Ovary (tissue), 10 donors: ENCODE measurements at regions of chr11 and their contacts with region 1.

Region 1: DNA sequence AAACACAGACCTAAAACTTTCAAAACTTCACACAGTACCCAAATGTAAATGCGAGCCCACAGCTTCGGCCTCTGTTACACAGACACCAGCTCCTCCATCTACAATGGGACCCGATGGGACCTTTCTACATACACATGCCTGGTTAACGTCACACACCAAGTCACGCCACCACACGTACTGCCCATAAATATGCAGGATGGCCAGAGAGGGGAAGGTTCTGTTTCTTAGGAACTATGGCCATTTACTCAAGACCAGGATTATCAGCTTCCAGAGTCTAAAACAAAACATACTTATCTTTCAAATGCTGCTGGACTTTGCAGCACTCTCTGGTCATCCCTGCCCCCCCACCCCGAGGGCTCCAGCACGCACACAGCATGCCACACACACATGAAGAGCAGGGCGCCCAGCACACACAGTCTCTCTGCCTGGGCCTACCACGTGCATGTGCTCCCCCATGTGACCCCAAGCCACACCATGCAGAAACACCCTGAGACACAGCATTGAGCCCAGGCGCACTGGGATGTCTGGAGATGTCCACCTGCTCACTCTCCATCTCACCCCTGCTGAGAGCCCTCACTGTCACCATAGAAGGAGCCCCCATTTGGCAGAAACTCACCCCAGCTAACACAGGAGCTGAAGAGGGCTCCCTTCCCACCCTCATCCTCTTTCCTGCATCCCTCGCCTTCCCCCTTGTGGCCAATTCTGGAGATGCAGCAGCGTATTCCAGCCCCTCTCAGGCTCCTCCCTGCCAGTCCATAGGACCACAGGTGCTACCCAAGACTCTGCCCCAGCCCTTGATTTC is 61.8 kb downstream of the SLC22A12 start:
- DNase-seq: peak; percentile 77 to 89 (median 88)
- H3K4me3 ChIP-seq: no peak overlapping the region
- H3K27ac ChIP-seq: no peak overlapping the region
- H3K4me1 ChIP-seq: no peaks in the 10 kb centered on the region
- H3K27me3 ChIP-seq: no peaks in the 10 kb centered on the region
- CTCF ChIP-seq: peak; percentile 81 to 93 (median 91)
- EP300 ChIP-seq: no peak
- POLR2A ChIP-seq: no peak

Region 2: DNA sequence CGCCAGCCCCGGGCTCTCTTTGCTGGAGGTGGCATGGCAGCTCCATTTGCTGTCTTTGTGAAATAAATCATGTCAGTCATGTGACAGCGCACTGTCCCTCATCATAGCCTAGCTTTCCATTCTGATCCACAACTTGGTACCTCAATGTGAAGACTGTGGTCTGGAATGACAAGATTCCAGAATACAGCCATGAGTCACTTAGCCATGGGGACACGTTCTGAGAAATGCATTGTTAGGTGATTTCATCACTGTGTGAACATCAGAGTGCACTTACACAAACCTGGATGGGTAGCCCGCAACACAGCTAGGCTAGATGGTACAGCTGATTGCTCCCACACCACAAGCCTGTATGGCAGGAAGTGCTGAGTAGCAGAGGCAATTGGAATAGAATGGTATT is 266.5 kb before region 1 on chr11:
- intact Hi-C with region 1: loop called in 1 of 4 experiments (anchors 10 kb)
- DNase-seq: no peak
- H3K4me3 ChIP-seq: no peak overlapping the region
- H3K27ac ChIP-seq: no peak overlapping the region
- H3K4me1 ChIP-seq: no peaks in the 10 kb centered on the region
- H3K27me3 ChIP-seq: no peaks in the 10 kb centered on the region
- CTCF ChIP-seq: no peak
- EP300 ChIP-seq: no peak
- POLR2A ChIP-seq: no peak

Region 3: GRCh38 chr11:64448599-64449556 is 203.9 kb before region 1 on chr11:
- intact Hi-C with region 1: loop called in 3 of 4 experiments (anchors 2 to 10 kb)
- DNase-seq: peak; percentile 58 to 85 (median 78)
- H3K4me3 ChIP-seq: peak overlapping the region; percentile 12
- H3K27ac ChIP-seq: no peak overlapping the region
- H3K4me1 ChIP-seq: peaks cover 8% of the 10 kb centered on the region
- H3K27me3 ChIP-seq: no peaks in the 10 kb centered on the region
- CTCF ChIP-seq: peak; percentile 59 to 73 (median 65)
- EP300 ChIP-seq: no peak
- POLR2A ChIP-seq: no peak

Region 4: DNA sequence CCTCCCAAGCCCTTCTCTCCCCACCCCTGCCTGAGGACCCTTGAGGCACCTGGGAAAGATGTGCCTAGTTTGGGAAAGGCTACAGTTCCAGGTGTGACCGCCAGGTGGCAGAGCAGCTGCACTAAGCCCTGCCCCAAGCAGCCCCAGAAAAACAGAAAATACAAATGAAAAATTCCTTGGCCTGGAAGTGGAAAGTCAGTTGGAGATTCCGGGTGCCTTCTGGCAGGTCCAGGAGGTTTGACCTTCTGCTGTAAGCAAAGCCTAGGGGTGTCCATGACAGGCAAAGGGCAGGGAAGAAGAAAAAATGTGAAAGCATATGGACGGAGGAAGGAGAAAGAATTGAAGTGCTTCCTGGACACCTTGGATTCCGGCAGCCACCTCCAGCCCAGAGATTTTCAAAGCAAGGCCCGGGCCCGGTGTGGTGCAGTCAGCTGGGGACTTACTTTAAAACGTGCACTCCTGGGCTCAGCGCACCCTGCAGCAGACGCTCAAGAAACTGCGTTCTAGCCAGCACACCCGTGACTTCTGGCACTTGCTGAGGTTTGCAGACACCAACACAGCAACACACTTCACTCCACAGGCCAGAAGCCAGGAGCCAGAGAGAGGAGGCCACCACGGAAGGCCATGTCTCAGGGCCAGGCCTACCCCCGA is 99.1 kb before region 1 on chr11:
- intact Hi-C with region 1: loop called in 3 of 4 experiments (anchors 1 to 2 kb)
- DNase-seq: peak; percentile 67 to 85 (median 80)
- H3K4me3 ChIP-seq: no peak overlapping the region
- H3K27ac ChIP-seq: peak overlapping the region; percentile 42 to 75
- H3K4me1 ChIP-seq: peaks cover 20% of the 10 kb centered on the region
- H3K27me3 ChIP-seq: no peaks in the 10 kb centered on the region
- CTCF ChIP-seq: peak; percentile 95 to 98 (median 97)
- EP300 ChIP-seq: no peak
- POLR2A ChIP-seq: no peak

Region 5: GRCh38 chr11:64713031-64713780 is 60.4 kb after region 1 on chr11:
- intact Hi-C with region 1: no loop called
- DNase-seq: peak in 2 of 5 donors; percentile 48 to 60
- H3K4me3 ChIP-seq: no peak overlapping the region
- H3K27ac ChIP-seq: no peak overlapping the region
- H3K4me1 ChIP-seq: no peaks in the 10 kb centered on the region
- H3K27me3 ChIP-seq: no peaks in the 10 kb centered on the region
- CTCF ChIP-seq: no peak
- EP300 ChIP-seq: no peak
- POLR2A ChIP-seq: no peak

Region 6: DNA sequence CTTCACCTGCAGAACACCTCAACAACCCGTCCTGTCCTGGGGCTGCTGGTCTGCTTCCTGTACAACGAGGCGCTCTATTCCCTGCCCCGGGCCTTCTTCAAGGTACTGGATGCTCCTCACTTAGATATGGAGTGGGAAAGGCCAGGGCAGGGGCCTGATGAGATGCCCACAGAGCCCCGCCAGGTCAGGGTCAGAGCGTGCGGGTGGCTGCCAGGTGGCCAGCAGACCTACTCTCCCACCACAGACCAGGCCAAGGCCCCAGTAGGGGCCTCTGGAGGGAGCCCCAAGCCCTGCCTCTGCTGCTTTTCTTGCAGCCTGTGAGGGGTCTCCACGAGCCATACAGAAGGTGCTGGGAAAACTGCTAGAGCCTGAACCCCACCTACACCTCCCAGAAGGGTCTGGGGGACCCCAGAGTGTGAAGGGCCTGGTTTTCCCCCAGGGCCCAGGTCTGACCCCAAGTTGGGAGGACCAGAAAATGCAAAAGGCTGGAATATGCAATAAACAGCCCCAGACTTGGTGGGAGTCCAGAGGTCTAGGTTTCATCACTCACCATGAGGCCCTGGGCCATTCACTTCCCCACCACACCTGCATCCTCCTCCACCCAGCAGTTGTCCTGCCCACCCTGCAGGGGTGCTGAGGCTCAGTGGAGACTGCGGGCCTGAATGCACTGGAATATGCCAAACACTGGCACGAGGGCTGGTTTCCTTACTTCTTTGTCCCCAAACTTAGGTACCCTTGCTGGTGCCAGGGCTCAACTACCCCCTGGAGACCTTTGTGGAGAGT is 1878.3 kb after region 1 on chr11:
- intact Hi-C with region 1: no loop called
- DNase-seq: no peak
- H3K4me3 ChIP-seq: no peak overlapping the region
- H3K27ac ChIP-seq: no peak overlapping the region
- H3K4me1 ChIP-seq: no peaks in the 10 kb centered on the region
- H3K27me3 ChIP-seq: no peaks in the 10 kb centered on the region
- CTCF ChIP-seq: no peak
- EP300 ChIP-seq: no peak
- POLR2A ChIP-seq: no peak